Activated T-helper 1 cell treated with anti-CD3 and anti-CD28 coated beads, Interleukin-12 subunit alpha, Interleukin-12 subunit beta, Interleukin-2, Interleukin-4 antibody, amounts not matched to agents 30 ng/mL and 10 ng/mL and 1 ng/mL, durations not matched to agents 14 hours and 24 hours and 36 hours (primary cell): ENCODE measurements at regions of chr1 and their contacts with region 1.

Region 1: GRCh38 chr1:172532700-172533509 is at the start of gene SUCO:
- DNase-seq: peak; percentile 100
- H3K4me3 Mint-ChIP-seq: peak within 1 kb of the TSS; percentile 98
- H3K27ac Mint-ChIP-seq: peak within 1 kb of the TSS; percentile 99
- H3K4me1 Mint-ChIP-seq: peaks cover 48% of the 10 kb centered on the region
- H3K27me3 Mint-ChIP-seq: peaks cover 7% of the 10 kb centered on the region
- total RNA-seq, gene SUCO: 39.3 and 40.4 TPM in 2 replicates

Region 2: GRCh38 chr1:171741872-171742576 is 790.9 kb before region 1 on chr1 and contains the start of gene VAMP4:
- intact Hi-C with region 1: loop called (anchors 1 kb)
- DNase-seq: peak; percentile 80
- H3K4me3 Mint-ChIP-seq: peak within 1 kb of the TSS; percentile 99
- H3K27ac Mint-ChIP-seq: peak within 1 kb of the TSS; percentile 100
- H3K4me1 Mint-ChIP-seq: peaks cover 56% of the 10 kb centered on the region
- H3K27me3 Mint-ChIP-seq: no peaks in the 10 kb centered on the region
- total RNA-seq, gene VAMP4: 8.8 and 10.4 TPM in 2 replicates

Region 3: GRCh38 chr1:172449585-172450534 is 83.0 kb before region 1 on chr1:
- intact Hi-C with region 1: loop called (anchors 1 kb)
- DNase-seq: peak; percentile 30
- H3K4me3 Mint-ChIP-seq: peak overlapping the region; percentile 43
- H3K27ac Mint-ChIP-seq: no peak overlapping the region
- H3K4me1 Mint-ChIP-seq: peaks cover 40% of the 10 kb centered on the region
- H3K27me3 Mint-ChIP-seq: peaks cover 2% of the 10 kb centered on the region

Region 4: DNA sequence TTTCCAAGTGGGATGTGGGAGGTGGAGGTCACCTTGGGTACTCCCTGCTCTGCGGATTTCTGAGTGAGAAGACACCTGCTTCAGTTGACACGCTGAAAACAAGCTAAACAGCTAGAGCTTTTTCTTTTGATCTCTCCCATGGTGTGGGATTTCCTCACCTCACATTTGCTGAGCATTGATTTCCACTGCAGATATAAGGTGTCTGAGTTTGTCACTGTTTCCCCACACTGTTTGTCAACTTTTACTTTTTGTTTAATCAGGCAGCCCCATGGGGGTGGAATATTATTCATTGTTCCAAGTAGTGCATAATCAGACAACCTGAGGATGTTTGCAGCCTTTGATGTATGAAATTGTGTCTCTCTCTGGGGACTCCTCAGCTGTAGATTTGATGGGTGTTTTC is 175.5 kb after region 1 on chr1:
- intact Hi-C with region 1: loop called (anchors 1 kb)
- DNase-seq: peak; percentile 53
- H3K4me3 Mint-ChIP-seq: peak overlapping the region; percentile 50
- H3K27ac Mint-ChIP-seq: peak overlapping the region; percentile 86
- H3K4me1 Mint-ChIP-seq: peaks cover 18% of the 10 kb centered on the region
- H3K27me3 Mint-ChIP-seq: no peaks in the 10 kb centered on the region

Region 5: DNA sequence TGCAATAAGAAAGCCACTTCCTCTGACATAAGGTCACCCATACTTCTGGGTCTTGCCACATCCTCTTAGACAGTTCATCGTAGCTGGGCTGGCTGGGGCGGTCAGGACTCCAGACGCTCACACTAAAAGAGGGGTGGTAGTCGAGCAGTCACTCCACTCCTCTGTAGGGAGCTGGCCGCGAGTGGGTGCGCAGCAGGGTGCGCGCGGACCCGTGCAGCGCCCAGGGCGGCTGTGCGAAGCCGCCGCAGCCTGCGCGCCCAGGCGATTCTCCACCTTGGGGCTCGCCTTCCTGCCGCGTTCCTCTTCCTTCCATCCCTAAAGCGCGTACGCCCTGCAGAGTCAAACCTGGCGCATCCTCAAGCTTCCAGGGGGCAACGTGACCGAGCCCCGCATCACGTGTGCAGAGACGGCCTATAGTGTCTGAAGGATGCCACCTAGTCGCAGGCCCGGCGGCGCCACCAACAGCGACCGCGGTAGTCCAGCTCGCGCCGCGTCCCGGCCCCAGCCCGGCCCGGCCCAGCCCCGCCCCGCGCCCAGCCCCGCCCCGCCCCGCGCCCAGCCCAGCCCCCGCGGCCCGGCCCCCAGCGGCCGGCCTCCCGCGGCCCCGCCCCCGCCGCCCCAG is 943.9 kb after region 1 on chr1:
- intact Hi-C with region 1: loop called (anchors 2 kb)
- DNase-seq: peak; percentile 74
- H3K4me3 Mint-ChIP-seq: peak overlapping the region; percentile 92
- H3K27ac Mint-ChIP-seq: peak overlapping the region; percentile 93
- H3K4me1 Mint-ChIP-seq: peaks cover 65% of the 10 kb centered on the region
- H3K27me3 Mint-ChIP-seq: no peaks in the 10 kb centered on the region

Region 6: DNA sequence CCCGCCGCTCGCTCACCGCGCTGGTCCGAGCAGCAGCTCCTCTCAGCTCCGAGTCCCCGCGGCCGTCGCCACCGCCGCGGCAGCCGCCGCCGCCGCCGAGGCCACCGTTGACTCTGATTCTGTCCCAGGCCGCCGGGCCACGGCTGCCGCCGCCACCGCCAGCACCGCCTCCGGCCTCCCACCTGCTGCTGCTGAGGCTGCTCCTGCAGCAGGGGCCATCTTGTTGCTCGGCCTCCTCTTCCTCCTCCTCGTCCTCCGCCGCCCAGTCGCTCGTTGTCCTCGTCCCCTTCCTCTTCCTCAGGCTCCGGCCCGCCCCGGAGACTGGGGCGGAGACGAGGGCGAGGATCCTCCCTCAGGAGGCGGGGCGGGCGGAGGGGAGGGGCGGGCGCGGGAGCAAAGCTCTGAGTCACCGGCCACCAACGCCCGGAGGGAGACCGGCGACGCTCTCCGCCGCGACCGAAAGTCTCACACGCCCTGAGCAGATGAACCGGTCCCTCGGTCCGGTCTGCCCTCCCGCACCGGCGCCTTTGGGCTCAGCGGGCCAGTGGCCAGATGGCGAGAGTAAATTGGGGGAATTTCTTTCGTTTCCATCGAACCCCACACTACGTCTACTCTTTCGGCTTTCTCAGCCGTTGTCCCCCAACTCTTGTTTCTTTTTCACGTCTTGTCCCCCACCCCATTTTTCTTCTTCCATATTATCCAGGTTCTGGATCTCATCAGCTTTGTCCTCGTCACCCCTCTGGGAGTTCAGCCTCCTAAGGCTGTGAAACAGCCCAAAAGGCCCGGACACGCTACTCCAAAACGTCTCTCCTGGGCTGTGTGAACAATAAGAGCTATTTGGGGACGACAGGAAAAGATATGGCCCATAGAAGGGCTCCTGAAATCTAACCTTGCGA is 1489.4 kb after region 1 on chr1 and contains the start of gene RC3H1:
- intact Hi-C with region 1: loop called (anchors 5 kb)
- DNase-seq: peak; percentile 84
- H3K4me3 Mint-ChIP-seq: peak within 1 kb of the TSS; percentile 99
- H3K27ac Mint-ChIP-seq: peak within 1 kb of the TSS; percentile 96
- H3K4me1 Mint-ChIP-seq: peaks cover 42% of the 10 kb centered on the region
- H3K27me3 Mint-ChIP-seq: peaks cover 2% of the 10 kb centered on the region
- total RNA-seq, gene RC3H1: 47.1 and 49.5 TPM in 2 replicates